ENCODE measurements at regions of chr7 and their contacts with region 1.

Region 1: GRCh38 chr7:134646425-134647305 is at the start of gene BPGM:
- DNase-seq: peak; percentile 88 to 100 (median 98)
- ATAC-seq: peak; percentile 94
- H3K4me3 Mint-ChIP-seq: no peak within 1 kb of the TSS
- H3K27ac Mint-ChIP-seq: no peak within 1 kb of the TSS
- H3K4me1 Mint-ChIP-seq: peaks cover 16 to 41% (median 38%) of the 10 kb centered on the region in 4 donors
- H3K27me3 Mint-ChIP-seq: no peaks in the 10 kb centered on the region
- polyA plus RNA-seq, gene BPGM: 17.2 to 30.1 (median 21.3) TPM

Region 2: DNA sequence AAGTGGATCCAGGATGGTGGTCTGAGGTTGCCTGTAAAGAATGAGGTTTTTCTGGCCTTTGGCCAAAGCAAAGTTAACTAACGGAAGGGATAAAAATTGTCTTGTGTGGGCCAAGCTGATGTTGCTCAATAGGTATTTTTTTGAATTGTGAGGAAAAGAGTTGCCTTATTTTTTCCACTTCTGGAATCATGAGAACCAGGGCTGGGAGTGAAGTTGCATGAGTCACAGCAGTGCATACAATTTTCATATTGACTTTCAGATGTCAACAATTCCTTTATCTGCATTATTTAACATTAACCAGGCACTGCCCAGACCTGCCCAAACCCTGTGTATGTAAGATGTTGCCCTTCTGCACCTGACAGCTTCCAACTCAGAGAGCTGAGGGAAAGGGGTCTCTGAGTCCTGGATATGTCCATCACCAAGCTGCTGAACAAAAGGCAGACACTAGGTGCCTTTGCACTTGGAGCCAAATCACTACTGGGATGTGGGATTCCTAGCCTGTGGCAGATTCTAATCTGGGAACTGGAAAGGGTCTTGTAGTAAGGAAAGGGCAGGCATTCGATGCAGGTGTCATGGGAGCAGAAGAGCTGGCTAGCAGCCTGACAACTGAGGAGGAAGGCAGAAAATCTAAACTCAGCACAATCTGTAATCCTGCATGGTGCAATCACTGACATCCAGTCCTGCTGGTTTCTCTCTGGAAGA is 277.7 kb before region 1 on chr7:
- POLR2A ChIA-PET with region 1: no interaction called
- DNase-seq: no peak
- ATAC-seq: no peak
- H3K4me3 Mint-ChIP-seq: no peak overlapping the region
- H3K27ac Mint-ChIP-seq: no peak overlapping the region
- H3K4me1 Mint-ChIP-seq: no peaks in the 10 kb centered on the region
- H3K27me3 Mint-ChIP-seq: peaks cover 15 to 49% (median 20%) of the 10 kb centered on the region in 5 donors

Region 3: DNA sequence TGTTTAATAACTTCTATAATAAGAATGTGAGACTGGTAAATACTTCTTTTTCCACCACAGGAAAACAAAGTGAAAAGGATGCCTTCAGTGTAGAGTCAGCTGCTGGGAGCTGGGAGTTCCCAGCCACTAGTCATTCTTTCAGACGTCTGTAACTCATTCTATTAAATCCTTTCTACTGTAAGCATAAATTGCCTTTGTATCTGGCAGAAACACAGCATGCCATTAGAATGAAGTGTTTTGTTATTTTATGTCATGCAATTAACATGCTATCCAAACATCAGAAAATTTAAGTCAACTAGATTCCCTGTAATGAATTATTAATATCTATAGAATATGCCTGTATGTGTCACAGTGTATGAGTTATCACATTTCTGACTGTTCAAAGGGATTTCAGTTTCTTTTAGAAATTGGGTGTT is 14.3 kb after region 1 on chr7:
- POLR2A ChIA-PET with region 1: interaction called, 17 read pairs
- DNase-seq: no peak
- ATAC-seq: no peak
- H3K4me3 Mint-ChIP-seq: no peak overlapping the region
- H3K27ac Mint-ChIP-seq: no peak overlapping the region
- H3K4me1 Mint-ChIP-seq: peaks cover 14 to 53% (median 30%) of the 10 kb centered on the region in 4 donors
- H3K27me3 Mint-ChIP-seq: no peaks in the 10 kb centered on the region

Region 4: GRCh38 chr7:134701272-134701671 is 54.6 kb after region 1 on chr7:
- POLR2A ChIA-PET with region 1: interaction called, 11 read pairs
- DNase-seq: peak in 8 of 10 donors; percentile 10 to 70 (median 30)
- ATAC-seq: peak; percentile 69 to 95
- H3K4me3 Mint-ChIP-seq: no peak overlapping the region
- H3K27ac Mint-ChIP-seq: peak overlapping the region in 1 of 10 donors; percentile 21
- H3K4me1 Mint-ChIP-seq: peaks cover 0 to 2% (median 0%) of the 10 kb centered on the region in 4 donors
- H3K27me3 Mint-ChIP-seq: no peaks in the 10 kb centered on the region

Region 5: DNA sequence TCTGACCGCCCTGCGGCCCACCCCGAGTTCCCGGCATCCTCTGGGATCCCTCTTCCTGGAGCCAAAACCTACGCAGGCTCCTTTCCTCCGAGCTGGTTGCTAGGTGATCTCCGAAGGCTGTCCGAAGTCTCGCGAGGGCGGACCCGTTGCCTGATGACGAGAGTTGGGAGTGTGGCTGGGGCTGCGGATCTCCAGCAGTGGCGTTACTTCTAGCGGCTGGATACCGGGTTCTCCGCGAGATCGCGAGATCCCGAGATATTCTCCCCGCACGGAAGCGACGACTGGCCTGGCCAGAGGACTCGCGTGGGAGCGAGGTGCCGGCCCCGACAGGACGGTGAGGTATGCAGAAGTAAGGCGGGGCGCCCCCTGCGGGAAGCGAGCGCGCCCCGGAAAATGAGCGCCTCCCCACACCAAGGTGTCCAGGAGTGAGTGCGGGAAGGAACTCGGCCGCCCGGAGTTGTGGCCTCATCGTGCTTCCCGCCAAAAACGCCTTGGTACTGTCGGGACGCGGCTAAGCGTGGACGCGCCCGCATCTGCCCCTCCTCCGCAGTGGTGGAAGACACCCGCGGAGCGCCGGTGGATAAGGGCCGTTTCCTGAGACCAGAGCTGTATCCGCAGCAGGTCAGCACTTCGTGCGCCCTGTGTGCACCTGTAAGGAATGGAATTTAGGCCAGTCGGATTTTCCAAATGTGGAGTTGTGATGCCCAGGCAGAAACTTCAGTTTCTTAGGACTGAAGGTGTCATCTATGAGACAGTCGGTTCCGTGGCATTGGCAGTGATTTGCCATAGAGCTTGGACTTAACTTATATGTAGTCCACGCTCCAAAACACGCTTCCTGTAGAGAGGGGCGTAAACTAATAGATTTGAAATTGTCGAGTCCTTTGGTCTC is 339.9 kb after region 1 on chr7 and contains the start of gene AGBL3:
- POLR2A ChIA-PET with region 1: interaction called, 10 read pairs
- DNase-seq: peak; percentile 74 to 97 (median 90)
- ATAC-seq: peak; percentile 88 to 90
- H3K4me3 Mint-ChIP-seq: peak within 1 kb of the TSS; percentile 93 to 100 (median 98)
- H3K27ac Mint-ChIP-seq: peak within 1 kb of the TSS; percentile 95 to 100 (median 100)
- H3K4me1 Mint-ChIP-seq: peaks cover 26 to 55% (median 51%) of the 10 kb centered on the region in 4 donors
- H3K27me3 Mint-ChIP-seq: no peaks in the 10 kb centered on the region
- polyA plus RNA-seq, gene AGBL3: 1.8 to 4.0 (median 3.2) TPM

Region 6: DNA sequence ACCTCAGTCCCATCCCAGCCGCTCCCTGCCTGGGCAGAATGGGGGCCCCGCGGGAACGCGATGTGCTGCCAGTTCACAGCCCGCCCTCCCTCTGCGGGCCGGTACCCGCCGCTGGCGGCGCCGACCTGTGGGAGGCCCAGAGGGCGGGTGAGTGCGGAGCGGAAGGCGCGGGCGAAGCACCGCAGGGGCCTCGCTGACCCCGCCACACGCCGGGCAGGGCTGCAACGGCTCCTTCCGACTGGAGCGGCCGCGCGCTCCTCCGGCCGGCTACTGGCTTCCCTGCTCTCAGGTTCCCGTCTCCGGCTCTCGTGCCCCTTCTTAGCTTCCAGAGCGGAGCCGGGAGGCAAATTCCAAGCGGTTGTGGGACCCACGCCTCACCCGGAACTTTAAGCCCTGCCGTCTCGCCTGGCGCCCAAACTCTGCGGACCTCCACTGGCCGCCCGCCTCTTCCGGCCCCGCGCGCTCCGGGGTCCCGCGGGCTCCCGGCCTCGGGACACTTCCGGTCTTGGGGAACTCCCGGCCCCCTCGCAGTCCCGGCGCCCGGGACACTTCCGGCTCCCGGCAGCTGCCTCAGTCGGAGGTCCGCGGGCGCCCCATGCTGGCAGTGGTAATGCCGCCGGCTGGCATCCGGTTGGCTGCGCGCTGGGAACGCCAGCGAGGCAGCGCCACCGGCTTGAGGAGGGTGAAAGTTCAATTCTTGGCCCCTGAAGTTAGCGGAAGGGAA is 523.8 kb after region 1 on chr7 and contains the start of gene CYREN:
- POLR2A ChIA-PET with region 1: interaction called, 16 read pairs
- DNase-seq: peak; percentile 78 to 93 (median 84)
- ATAC-seq: peak; percentile 77 to 79
- H3K4me3 Mint-ChIP-seq: peak within 1 kb of the TSS; percentile 85 to 94 (median 90)
- H3K27ac Mint-ChIP-seq: peak within 1 kb of the TSS; percentile 93 to 98 (median 96)
- H3K4me1 Mint-ChIP-seq: peaks cover 26 to 59% (median 55%) of the 10 kb centered on the region in 4 donors
- H3K27me3 Mint-ChIP-seq: no peaks in the 10 kb centered on the region
- polyA plus RNA-seq, gene CYREN: 55.5 to 70.1 (median 59.5) TPM

Measured in naive thymus-derived CD8-positive, alpha-beta T cell (primary cell).